Caco-2 (cell line): ENCODE measurements at regions of chr3 and their contacts with region 1.

Region 1: DNA sequence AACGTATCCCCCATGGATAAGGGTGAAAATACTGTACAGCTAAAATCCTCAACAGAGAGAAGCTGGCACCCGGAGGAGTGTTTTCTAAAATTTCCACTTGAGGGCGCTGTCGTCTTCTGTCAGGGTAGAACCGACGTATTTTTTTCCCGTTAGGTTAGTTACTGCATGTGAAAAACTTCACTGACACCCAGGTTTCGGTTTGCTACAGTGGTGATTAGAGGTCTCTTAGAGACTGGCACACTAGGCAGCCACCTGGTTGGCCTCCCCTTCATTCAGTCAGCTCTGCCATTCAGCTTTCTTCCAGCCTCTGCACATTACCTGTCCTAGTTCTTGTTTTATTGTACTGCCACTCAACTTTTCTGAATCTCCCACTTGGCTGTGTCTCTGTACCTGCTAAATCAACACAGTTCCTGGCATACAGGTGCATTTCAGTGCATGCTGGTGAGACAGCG is 18.4 kb downstream of the CCK start:
- DNase-seq: peak in 1 of 2 experiments; percentile 66
- H3K4me3 ChIP-seq: no peak overlapping the region
- H3K4me3 Mint-ChIP-seq: no peak overlapping the region
- H3K27ac Mint-ChIP-seq: no peak overlapping the region
- H3K4me1 ChIP-seq: no peaks in the 10 kb centered on the region
- H3K4me1 Mint-ChIP-seq: no peaks in the 10 kb centered on the region
- H3K27me3 ChIP-seq: no peaks in the 10 kb centered on the region; the same call in none of the 2 replicates
- H3K27me3 Mint-ChIP-seq: peaks cover 8% of the 10 kb centered on the region
- CTCF ChIP-seq: peak; percentile 72 to 76

Region 2: DNA sequence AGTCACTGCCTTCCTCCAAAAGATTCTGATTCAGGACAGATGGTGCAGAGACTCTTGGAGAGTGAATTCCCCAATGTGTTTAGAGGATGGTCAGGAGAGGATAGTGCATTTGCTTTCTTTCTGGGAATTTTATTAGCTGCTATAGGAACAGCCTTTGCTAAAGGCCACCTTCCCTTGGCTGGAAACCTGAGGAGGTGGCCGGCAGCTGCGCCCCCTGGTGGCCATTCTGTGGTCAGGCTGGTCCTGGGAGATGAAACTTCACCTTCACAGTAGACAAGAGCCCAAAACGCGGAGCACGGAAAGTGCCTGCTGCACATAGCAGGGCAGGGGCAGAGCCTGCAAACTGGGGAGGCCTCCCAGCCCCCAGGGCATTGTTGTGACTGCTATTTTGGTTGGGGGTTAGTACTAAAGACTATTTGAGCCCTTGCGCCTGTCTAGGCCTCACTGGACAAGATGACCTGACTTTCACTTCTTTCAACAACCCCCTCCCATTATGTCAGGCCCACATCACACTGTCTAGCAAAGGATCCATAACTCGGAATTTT is 299.9 kb after region 1 on chr3:
- CTCF ChIA-PET with region 1: interaction called, 3 read pairs
- POLR2A ChIA-PET with region 1: no interaction called
- intact Hi-C with region 1: loop called (anchors 5 kb)
- DNase-seq: peak; percentile 59 to 76
- H3K4me3 ChIP-seq: no peak overlapping the region
- H3K4me3 Mint-ChIP-seq: no peak overlapping the region
- H3K27ac Mint-ChIP-seq: no peak overlapping the region
- H3K4me1 ChIP-seq: no peaks in the 10 kb centered on the region
- H3K4me1 Mint-ChIP-seq: no peaks in the 10 kb centered on the region
- H3K27me3 ChIP-seq: no peaks in the 10 kb centered on the region
- H3K27me3 Mint-ChIP-seq: no peaks in the 10 kb centered on the region
- CTCF ChIP-seq: peak; percentile 87 to 94